Heart left ventricle (tissue), 16 donors: ENCODE measurements at regions of chr11 and their contacts with region 1.

Region 1: DNA sequence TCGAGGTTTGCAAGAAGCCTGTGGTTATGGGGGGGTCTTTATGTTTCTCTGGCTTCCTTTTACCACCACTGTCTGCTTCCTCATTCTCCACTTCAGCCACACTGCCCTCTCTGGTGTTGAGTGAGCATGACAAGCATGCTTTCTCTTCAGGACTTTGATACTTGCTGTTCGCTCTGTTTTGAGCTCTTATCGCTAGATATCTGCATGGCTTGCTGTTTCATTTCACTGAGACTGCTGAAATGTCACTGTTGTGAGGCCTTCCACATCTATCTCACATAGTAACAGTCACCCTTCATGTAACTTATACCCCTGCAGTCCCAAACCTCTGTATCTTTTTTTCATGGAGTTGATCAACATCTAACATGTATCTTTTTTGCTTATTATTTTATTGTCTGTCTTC is 59.8 kb downstream of the TMEM135 start:
- DNase-seq: peak in 3 of 5 donors; percentile 25 to 34 (median 26)
- ATAC-seq: peak; percentile 68 to 84 (median 76)
- H3K4me3 ChIP-seq: no peak overlapping the region
- H3K27ac ChIP-seq: no peak overlapping the region
- H3K4me1 ChIP-seq: peaks cover 0 to 9% (median 0%) of the 10 kb centered on the region in 12 donors
- H3K27me3 ChIP-seq: no peaks in the 10 kb centered on the region
- CTCF ChIP-seq: peak; percentile 43 to 76 (median 64)
- POLR2A ChIP-seq: no peak

Region 2: GRCh38 chr11:87275176-87275575 is 177.6 kb after region 1 on chr11:
- intact Hi-C with region 1: loop called in 1 of 10 experiments (anchors 10 kb)
- DNase-seq: no peak
- ATAC-seq: no peak
- H3K4me3 ChIP-seq: no peak overlapping the region
- H3K27ac ChIP-seq: no peak overlapping the region
- H3K4me1 ChIP-seq: peaks cover 0 to 8% (median 0%) of the 10 kb centered on the region in 12 donors
- H3K27me3 ChIP-seq: no peaks in the 10 kb centered on the region
- CTCF ChIP-seq: no peak
- POLR2A ChIP-seq: no peak

Region 3: GRCh38 chr11:87437844-87438223 is 340.3 kb after region 1 on chr11:
- intact Hi-C with region 1: no loop called
- DNase-seq: no peak
- ATAC-seq: no peak
- H3K4me3 ChIP-seq: no peak overlapping the region
- H3K27ac ChIP-seq: no peak overlapping the region
- H3K4me1 ChIP-seq: peaks cover 0 to 11% (median 0%) of the 10 kb centered on the region in 12 donors
- H3K27me3 ChIP-seq: no peaks in the 10 kb centered on the region
- CTCF ChIP-seq: no peak
- POLR2A ChIP-seq: no peak

Region 4: DNA sequence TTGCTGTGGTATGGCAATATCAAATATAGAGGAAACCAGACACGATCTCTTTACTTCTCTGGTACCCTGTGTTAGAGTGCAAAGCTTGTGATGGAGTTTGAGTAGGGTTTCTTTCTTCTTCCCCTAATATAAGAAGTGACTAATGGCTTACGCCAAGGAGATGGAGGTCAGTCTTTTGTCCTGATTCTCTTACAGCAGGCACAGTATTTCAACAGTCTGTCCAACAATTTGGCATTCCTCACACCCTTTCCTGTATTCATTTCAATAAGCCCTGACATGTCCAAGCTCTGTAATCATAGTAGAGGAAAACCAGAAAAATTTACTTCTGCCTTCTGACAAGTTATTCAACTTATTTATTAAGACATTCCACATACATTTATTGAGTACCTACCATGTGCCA is 486.3 kb after region 1 on chr11:
- intact Hi-C with region 1: no loop called
- DNase-seq: no peak
- ATAC-seq: no peak
- H3K4me3 ChIP-seq: no peak overlapping the region
- H3K27ac ChIP-seq: no peak overlapping the region
- H3K4me1 ChIP-seq: no peaks in the 10 kb centered on the region
- H3K27me3 ChIP-seq: no peaks in the 10 kb centered on the region
- CTCF ChIP-seq: no peak
- POLR2A ChIP-seq: no peak